Natural killer cell (primary cell): ENCODE measurements at regions of chr6 and their contacts with region 1.

Region 1: DNA sequence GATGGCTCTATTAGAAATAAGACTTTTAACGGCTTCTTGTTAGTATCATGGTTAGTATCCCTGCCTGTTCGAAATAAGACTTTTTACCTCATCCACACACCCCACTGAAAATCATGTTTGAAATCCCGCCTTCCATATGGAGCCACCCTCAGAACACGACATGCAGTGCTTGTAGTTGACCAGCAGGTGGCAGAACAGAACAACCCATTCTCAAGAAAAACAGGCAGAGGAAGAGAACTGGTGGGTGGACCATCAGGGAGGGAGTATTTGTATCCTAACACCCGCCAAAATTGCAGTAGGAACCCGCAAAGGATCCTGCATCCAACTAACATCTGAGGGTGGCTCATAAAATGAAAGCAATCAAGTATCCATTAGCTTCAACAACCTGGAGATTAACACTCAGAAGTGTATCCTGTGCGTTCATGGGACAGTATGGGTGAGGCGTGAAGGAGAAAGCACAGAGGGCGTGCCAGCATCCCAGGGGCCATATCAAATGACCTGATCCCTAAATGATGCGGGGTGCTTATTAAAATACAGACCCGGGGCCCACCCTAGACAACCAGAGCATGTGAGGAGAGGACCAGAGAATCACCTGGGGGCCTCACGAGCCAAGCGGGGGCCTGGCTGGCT is 89.6 kb upstream of the NHSL1 start:
- DNase-seq: peak; percentile 29 to 81
- ATAC-seq: peak; percentile 70 to 80 (median 78)
- H3K4me3 ChIP-seq: no peak overlapping the region
- H3K4me3 Mint-ChIP-seq: no peak overlapping the region
- H3K27ac ChIP-seq: no peak overlapping the region
- H3K27ac Mint-ChIP-seq: no peak overlapping the region
- H3K4me1 ChIP-seq: peaks cover 5% of the 10 kb centered on the region
- H3K4me1 Mint-ChIP-seq: peaks cover 14 to 24% of the 10 kb centered on the region in 2 donors
- H3K27me3 ChIP-seq: no peaks in the 10 kb centered on the region
- H3K27me3 Mint-ChIP-seq: peaks cover 0 to 6% of the 10 kb centered on the region in 2 donors
- CTCF ChIP-seq: peak; percentile 86

Region 2: GRCh38 chr6:138336221-138336620 is 252.7 kb before region 1 on chr6:
- intact Hi-C with region 1: no loop called
- DNase-seq: no peak
- ATAC-seq: no peak
- H3K4me3 ChIP-seq: no peak overlapping the region
- H3K4me3 Mint-ChIP-seq: no peak overlapping the region
- H3K27ac ChIP-seq: no peak overlapping the region
- H3K27ac Mint-ChIP-seq: no peak overlapping the region
- H3K4me1 ChIP-seq: no peaks in the 10 kb centered on the region
- H3K4me1 Mint-ChIP-seq: no peaks in the 10 kb centered on the region
- H3K27me3 ChIP-seq: no peaks in the 10 kb centered on the region
- H3K27me3 Mint-ChIP-seq: peaks cover 3 to 6% of the 10 kb centered on the region in 2 donors
- CTCF ChIP-seq: no peak

Region 3: DNA sequence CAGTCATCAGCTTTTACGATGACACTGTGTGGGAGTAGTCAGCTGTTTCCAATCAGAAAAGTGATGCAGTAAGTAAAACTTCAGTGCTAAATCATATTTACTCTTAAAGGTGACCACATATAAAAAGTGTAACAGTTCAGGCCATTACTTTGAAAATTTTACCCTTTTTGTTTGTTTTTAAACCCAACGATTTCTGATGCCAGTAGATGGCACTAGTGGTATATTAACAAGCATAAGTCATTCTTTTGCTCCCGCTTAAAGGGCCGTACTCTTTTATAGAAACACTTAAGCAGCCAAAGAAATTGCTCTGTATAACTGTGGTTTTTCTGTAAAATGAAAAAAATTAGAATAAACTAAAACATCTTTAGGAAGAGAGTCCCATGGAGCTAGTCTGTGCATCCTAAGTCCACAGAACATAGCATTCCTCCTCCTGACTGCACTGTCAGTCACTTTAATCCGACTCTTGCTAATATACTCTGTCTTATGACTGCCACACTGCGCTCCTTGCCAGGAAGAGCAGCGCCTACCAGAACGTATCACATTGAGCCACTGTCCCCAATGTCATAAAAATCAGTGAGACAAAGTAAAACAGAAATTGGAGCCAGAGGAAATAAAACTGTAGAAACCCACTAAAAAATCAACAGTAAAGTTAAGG is 159.8 kb before region 1 on chr6:
- intact Hi-C with region 1: loop called (anchors 2 kb)
- DNase-seq: peak in 1 of 2 donors; percentile 73
- ATAC-seq: peak; percentile 59 to 62 (median 60)
- H3K4me3 ChIP-seq: no peak overlapping the region
- H3K4me3 Mint-ChIP-seq: no peak overlapping the region
- H3K27ac ChIP-seq: no peak overlapping the region
- H3K27ac Mint-ChIP-seq: no peak overlapping the region
- H3K4me1 ChIP-seq: no peaks in the 10 kb centered on the region
- H3K4me1 Mint-ChIP-seq: no peaks in the 10 kb centered on the region
- H3K27me3 ChIP-seq: no peaks in the 10 kb centered on the region
- H3K27me3 Mint-ChIP-seq: peaks cover 6 to 7% of the 10 kb centered on the region in 2 donors
- CTCF ChIP-seq: peak; percentile 74

Region 4: DNA sequence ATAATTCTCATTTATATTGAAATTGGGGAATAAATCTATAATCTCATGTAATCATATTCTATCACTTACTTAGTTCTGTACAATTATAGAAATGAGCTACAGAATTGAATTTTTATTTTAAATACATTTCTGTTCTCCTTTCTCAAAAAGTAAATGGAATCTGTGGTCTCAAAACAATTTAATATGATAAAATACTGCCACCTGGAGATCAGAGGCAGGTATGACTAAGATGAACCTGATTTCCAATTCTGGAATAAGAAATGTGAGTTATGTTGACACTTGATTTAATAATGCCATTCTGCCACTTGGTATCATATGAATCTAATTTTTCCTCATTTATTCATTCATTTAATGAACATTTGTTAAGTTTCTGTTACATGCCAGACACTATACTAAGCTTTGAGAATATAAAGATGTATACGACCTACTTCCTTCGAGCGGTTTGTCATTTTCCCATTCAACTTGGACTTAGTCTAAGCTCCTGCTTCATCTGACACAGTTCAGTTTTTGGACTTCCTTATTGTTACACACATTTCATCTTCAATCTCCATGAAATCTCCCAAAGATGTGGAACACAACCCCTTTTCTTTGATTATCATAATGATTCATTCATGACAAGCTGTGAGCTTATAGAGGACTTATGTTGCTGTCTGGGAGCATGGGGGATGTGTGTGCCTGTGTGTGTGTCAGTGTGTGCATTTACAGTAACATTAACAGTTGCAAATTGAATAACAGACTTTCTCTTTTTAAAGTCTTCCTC is 177.2 kb after region 1 on chr6:
- intact Hi-C with region 1: loop called (anchors 1 kb)
- DNase-seq: peak in 1 of 2 donors; percentile 58
- ATAC-seq: peak in 1 of 3 donors; percentile 47
- H3K4me3 ChIP-seq: no peak overlapping the region
- H3K4me3 Mint-ChIP-seq: no peak overlapping the region
- H3K27ac ChIP-seq: no peak overlapping the region
- H3K27ac Mint-ChIP-seq: no peak overlapping the region
- H3K4me1 ChIP-seq: no peaks in the 10 kb centered on the region
- H3K4me1 Mint-ChIP-seq: no peaks in the 10 kb centered on the region
- H3K27me3 ChIP-seq: no peaks in the 10 kb centered on the region
- H3K27me3 Mint-ChIP-seq: no peaks in the 10 kb centered on the region
- CTCF ChIP-seq: peak; percentile 65

Region 5: DNA sequence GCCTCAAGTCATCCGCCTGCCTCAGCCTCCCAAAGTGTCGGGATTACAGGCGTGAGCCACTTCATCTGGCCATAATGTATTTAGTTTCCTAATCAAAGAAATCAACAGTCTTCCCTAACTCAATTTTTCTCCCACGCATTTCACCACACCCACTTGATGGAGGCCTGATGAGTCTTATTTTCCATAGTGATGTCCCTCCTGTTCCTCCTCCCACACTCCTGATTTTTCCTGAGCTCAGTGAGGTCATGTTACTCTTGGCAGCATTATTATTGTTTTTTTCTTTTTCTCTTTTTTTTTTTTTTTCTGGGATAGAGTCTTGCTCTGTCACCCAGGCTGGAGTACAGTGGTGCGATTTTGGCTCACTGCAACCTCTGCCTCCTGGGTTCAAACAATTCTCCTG is 448.6 kb after region 1 on chr6:
- intact Hi-C with region 1: no loop called
- DNase-seq: no peak
- ATAC-seq: no peak
- H3K4me3 ChIP-seq: no peak overlapping the region
- H3K4me3 Mint-ChIP-seq: no peak overlapping the region
- H3K27ac ChIP-seq: no peak overlapping the region
- H3K27ac Mint-ChIP-seq: peak overlapping the region in 1 of 2 donors; percentile 41
- H3K4me1 ChIP-seq: no peaks in the 10 kb centered on the region
- H3K4me1 Mint-ChIP-seq: peaks cover 16 to 28% of the 10 kb centered on the region in 2 donors
- H3K27me3 ChIP-seq: no peaks in the 10 kb centered on the region
- H3K27me3 Mint-ChIP-seq: no peaks in the 10 kb centered on the region
- CTCF ChIP-seq: no peak